ENCODE measurements at regions of chr1 and their contacts with region 1.

Region 1: DNA sequence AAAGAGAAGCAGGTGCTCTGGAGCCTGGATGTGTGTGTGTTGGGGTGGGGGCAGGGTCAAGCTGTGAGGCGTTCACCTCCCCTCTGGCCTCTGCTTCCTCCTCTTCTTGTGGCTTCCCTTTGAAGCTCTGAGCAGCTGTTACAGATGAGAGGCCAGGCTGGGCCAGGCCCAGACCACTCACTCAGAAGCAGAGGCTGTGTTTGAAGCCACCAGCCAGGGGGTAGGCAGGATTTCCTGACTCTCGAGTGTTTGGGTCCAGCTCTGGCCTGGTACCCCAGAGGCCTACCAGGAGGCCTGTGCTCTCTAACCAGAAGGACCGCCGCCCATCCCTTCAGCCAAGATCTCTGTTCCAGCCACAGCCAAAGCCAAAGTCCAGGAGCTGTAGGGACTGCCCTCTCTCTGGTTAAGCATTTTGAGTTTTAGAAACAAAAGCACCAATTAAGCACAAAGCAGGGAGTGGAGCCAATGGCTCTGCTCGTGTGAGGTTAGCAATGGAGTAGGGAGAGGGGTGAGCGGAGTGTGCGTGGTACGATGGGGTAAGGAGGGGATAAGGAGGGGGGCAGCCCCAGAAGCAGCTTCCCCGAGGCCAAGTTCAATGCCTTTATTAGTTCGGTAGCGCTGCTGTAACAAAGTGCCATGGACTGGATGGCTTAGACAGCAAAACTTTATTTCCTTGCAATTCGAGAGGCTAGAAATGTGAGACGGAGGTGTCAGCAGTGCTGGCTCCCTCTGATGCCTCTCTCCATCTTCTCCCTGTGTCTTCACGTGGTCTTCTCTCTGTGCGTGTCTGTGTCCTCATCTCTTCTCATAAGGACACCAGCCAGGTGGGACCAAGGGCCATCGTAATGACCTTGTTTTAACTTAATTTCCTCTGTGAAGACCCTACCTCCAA is 20.5 kb downstream of the RCSD1 start:
- DNase-seq: peak; percentile 60
- ATAC-seq: peak; percentile 73
- H3K4me3 ChIP-seq: peak overlapping the region in 3 of 5 experiments; percentile 1 to 16 (median 15)
- H3K4me3 Mint-ChIP-seq: peak overlapping the region; percentile 84
- H3K27ac ChIP-seq: peak overlapping the region; percentile 76 to 83
- H3K27ac Mint-ChIP-seq: peak overlapping the region; percentile 94
- H3K4me1 ChIP-seq: peaks cover 83 to 89% of the 10 kb centered on the region in 2 donors
- H3K4me1 Mint-ChIP-seq: peaks cover 89% of the 10 kb centered on the region
- H3K27me3 ChIP-seq: no peaks in the 10 kb centered on the region
- H3K27me3 Mint-ChIP-seq: no peaks in the 10 kb centered on the region
- CTCF ChIP-seq: no peak

Region 2: DNA sequence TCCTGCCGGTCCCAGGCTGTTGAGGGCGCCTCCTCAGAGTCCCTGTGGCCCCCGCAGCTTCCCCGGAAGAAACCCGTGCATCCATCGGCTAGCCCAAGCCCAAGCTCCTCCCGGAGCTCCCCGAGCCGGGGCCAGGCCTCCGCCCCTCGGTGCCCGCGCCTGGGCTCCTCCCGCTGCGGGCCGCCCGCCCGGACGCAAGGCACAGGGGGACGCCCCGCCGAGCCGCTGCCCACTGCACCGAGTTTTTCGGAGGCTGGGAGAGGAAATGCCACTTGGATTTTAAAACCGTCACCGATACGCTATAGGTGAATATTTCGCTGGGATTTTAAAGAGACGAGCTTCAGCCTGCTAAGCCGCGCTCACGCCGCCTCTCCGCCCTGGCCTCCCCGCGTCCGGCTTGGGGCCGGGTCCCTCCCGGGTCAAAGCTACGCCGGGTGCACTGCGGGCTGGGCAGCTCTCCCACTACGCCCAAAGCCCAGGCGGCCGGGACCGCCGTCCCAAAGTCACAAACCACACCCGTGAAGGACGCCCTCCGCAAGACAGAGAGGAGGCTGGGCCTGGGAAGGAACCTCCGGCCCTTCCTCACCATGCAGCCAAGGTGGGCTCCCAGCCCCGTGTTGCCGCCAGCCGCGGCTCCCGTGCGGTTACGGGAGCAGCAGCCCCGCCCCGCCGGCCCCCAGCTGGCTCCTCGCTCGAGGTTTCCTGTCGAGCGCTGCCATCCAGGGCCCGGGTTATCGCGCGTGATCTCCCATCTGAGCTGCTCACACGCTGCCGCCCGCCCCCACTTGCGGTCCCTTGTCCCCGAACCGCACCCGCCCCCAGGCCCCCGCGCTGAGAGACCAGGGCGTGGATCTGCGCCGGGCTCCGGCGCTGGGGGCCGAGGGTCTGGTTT is 195.4 kb before region 1 on chr1:
- CTCF ChIA-PET with region 1: no interaction called
- POLR2A ChIA-PET with region 1: no interaction called
- intact Hi-C with region 1: no loop called
- DNase-seq: peak; percentile 78
- ATAC-seq: peak; percentile 78
- H3K4me3 ChIP-seq: peak overlapping the region; percentile 50 to 82 (median 77)
- H3K4me3 Mint-ChIP-seq: peak overlapping the region; percentile 79
- H3K27ac ChIP-seq: peak overlapping the region in 1 of 2 donors; percentile 66
- H3K27ac Mint-ChIP-seq: no peak overlapping the region
- H3K4me1 ChIP-seq: peaks cover 3 to 23% of the 10 kb centered on the region in 2 donors
- H3K4me1 Mint-ChIP-seq: peaks cover 14% of the 10 kb centered on the region
- H3K27me3 ChIP-seq: peaks cover 0 to 6% (median 0%) of the 10 kb centered on the region in 4 experiments
- H3K27me3 Mint-ChIP-seq: peaks cover 4% of the 10 kb centered on the region
- CTCF ChIP-seq: no peak

Region 3: DNA sequence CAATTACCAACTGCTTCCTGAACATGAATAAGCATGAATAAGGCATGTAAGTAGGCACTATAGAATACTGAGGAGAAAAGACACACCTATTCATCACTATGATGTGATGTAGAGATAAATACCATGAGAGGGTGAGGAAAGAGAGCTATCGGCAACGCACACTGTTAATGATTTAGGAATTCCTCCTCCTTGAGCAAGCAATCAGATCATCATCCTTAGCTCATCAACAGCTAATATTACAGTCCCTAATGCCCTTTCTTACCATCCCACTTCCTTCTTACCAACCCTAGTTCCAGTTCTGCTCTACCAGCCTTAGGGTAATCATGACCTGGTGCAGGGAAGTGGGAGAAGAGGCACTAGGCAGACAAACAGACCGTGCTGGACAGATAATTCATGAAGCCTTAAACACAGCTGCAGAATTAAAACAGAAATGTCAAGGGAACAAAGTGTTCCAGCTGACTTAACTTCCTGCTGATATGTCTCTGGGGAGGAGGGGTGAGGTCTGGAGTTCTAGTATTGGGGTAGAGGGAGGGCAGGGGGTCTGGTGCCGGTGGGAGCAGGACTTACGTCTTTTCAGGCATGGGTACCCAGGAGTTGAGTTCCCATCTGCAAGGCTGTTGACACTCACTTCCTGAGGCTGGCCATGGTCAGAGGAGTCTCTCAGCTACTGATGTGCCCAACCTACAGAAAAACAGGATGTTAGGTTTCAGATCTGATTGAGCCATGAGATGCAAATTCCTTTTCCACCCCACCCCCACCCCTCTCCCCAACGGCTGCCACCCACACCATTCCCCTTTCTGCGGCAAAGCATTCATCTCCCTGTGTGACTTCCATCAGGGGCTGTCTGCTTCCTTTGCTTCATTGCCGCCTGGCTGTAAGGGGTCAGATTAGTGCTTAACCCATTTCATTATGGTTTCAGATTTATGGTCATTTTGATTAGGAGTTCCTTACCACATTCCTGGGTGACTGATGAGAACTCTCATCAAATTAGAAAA is 33.1 kb before region 1 on chr1:
- CTCF ChIA-PET with region 1: no interaction called
- POLR2A ChIA-PET with region 1: interaction called, 7 read pairs
- intact Hi-C with region 1: loop called (anchors 5 kb)
- DNase-seq: peak; percentile 94
- ATAC-seq: peak; percentile 90
- H3K4me3 ChIP-seq: peak overlapping the region; percentile 42 to 81 (median 58)
- H3K4me3 Mint-ChIP-seq: peak overlapping the region; percentile 84
- H3K27ac ChIP-seq: peak overlapping the region; percentile 89 to 97
- H3K27ac Mint-ChIP-seq: peak overlapping the region; percentile 92
- H3K4me1 ChIP-seq: peaks cover 87 to 92% of the 10 kb centered on the region in 2 donors
- H3K4me1 Mint-ChIP-seq: peaks cover 86% of the 10 kb centered on the region
- H3K27me3 ChIP-seq: no peaks in the 10 kb centered on the region
- H3K27me3 Mint-ChIP-seq: no peaks in the 10 kb centered on the region
- CTCF ChIP-seq: no peak

Region 4: DNA sequence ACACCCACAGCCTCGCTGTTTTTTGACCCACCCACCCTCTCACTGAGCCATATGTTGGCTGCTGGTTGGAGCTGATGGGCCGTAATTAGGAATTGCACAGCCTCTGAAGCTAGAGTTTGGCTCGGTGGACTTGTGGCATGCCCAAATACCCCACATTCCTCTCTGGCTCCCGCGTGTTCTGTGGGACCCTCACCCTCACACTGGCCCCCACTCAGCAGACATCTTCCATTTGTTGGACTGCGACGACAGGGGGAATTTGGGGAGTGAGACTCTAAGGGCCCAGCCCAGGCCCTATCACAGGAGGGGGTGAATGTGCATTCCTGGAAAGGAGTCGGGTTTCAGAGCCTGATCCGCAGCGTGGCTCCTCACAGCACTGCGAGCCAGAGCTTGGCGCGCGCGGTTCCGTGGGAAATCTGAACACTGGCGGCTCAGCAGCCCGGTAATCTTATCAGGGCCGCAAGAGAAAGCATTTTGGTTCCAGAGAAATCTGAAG is 15.3 kb before region 1 on chr1:
- CTCF ChIA-PET with region 1: interaction called, 24 read pairs
- POLR2A ChIA-PET with region 1: interaction called, 19 read pairs
- intact Hi-C with region 1: loop called (anchors 2 kb)
- DNase-seq: no peak
- ATAC-seq: no peak
- H3K4me3 ChIP-seq: no peak overlapping the region
- H3K4me3 Mint-ChIP-seq: peak overlapping the region; percentile 98
- H3K27ac ChIP-seq: peak overlapping the region in 1 of 2 donors; percentile 93
- H3K27ac Mint-ChIP-seq: peak overlapping the region; percentile 55
- H3K4me1 ChIP-seq: peaks cover 72 to 77% of the 10 kb centered on the region in 2 donors
- H3K4me1 Mint-ChIP-seq: peaks cover 83% of the 10 kb centered on the region
- H3K27me3 ChIP-seq: no peaks in the 10 kb centered on the region
- H3K27me3 Mint-ChIP-seq: no peaks in the 10 kb centered on the region
- CTCF ChIP-seq: no peak

Region 5: DNA sequence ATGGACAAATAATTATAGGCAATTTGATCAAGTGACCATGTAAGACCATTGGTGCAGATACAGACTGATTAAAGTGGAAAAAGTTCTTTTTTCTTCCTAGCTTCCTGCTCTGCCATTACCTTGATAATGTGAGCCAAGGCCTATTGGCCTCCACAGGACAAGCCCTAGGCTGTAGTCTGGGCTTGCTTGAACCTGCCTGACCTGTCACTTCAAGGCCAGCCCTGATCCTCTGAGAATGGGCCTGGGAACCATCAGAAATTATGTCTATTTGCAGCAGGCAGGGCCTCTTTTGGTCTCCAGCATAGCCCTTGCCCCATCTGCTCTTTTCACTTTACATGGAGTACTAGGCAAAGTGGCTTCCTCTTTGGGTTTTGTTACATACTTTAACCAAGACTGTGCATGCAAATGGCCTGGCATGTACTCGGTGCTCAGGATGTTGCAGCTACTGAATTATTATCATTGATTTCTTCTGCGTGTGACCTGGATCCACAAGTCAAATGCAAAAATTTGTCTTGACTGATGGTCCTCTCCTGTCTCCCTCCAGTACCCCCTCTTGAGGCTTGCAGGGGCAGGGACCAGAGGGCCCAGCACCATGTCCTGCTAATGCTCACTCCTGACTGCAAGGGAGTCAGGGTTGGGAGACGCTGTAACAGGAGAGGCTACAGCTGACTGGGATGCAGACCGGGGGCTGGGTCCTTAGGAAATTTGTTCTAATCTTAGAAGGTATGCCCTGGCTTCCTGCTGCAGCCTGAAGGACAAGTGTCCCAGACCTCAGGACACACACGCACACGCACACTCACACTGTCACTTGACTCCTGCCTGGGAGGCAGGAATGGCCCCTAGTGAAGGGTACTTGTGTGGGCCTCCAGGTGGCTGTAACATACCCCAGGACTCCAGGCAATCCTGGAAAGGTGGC is 19.0 kb after region 1 on chr1:
- CTCF ChIA-PET with region 1: interaction called, 9 read pairs
- POLR2A ChIA-PET with region 1: interaction called, 5 read pairs
- intact Hi-C with region 1: loop called (anchors 2 kb)
- DNase-seq: no peak
- ATAC-seq: peak; percentile 24
- H3K4me3 ChIP-seq: no peak overlapping the region
- H3K4me3 Mint-ChIP-seq: peak overlapping the region; percentile 36
- H3K27ac ChIP-seq: peak overlapping the region; percentile 27 to 72
- H3K27ac Mint-ChIP-seq: peak overlapping the region; percentile 47
- H3K4me1 ChIP-seq: peaks cover 76 to 84% of the 10 kb centered on the region in 2 donors
- H3K4me1 Mint-ChIP-seq: peaks cover 97% of the 10 kb centered on the region
- H3K27me3 ChIP-seq: no peaks in the 10 kb centered on the region
- H3K27me3 Mint-ChIP-seq: no peaks in the 10 kb centered on the region
- CTCF ChIP-seq: no peak

Region 6: DNA sequence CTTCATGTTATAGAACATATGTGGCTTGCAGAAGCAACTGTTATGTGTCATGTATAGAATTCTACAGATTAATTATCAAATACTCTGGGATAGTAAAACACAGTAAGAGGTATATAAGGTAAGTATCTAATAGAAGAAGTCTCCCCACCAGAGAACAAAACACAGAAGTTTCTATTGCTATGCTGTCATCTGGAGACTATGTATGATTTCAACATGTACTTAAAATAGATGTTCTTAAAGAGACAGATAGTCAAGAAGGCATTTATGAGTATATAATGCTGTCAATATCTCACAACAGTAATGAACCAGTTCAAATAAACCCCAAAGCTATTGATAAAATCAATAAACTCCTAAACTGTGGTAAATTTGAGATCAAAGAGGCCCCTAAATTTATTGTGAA is 271.5 kb after region 1 on chr1:
- CTCF ChIA-PET with region 1: no interaction called
- POLR2A ChIA-PET with region 1: no interaction called
- intact Hi-C with region 1: no loop called
- DNase-seq: no peak
- ATAC-seq: no peak
- H3K4me3 ChIP-seq: no peak overlapping the region
- H3K4me3 Mint-ChIP-seq: no peak overlapping the region
- H3K27ac ChIP-seq: no peak overlapping the region
- H3K27ac Mint-ChIP-seq: no peak overlapping the region
- H3K4me1 ChIP-seq: peaks cover 0 to 4% of the 10 kb centered on the region in 2 donors
- H3K4me1 Mint-ChIP-seq: peaks cover 13% of the 10 kb centered on the region
- H3K27me3 ChIP-seq: no peaks in the 10 kb centered on the region
- H3K27me3 Mint-ChIP-seq: no peaks in the 10 kb centered on the region
- CTCF ChIP-seq: no peak